ENCODE measurements at regions of chr7 and their contacts with region 1.

Region 1: DNA sequence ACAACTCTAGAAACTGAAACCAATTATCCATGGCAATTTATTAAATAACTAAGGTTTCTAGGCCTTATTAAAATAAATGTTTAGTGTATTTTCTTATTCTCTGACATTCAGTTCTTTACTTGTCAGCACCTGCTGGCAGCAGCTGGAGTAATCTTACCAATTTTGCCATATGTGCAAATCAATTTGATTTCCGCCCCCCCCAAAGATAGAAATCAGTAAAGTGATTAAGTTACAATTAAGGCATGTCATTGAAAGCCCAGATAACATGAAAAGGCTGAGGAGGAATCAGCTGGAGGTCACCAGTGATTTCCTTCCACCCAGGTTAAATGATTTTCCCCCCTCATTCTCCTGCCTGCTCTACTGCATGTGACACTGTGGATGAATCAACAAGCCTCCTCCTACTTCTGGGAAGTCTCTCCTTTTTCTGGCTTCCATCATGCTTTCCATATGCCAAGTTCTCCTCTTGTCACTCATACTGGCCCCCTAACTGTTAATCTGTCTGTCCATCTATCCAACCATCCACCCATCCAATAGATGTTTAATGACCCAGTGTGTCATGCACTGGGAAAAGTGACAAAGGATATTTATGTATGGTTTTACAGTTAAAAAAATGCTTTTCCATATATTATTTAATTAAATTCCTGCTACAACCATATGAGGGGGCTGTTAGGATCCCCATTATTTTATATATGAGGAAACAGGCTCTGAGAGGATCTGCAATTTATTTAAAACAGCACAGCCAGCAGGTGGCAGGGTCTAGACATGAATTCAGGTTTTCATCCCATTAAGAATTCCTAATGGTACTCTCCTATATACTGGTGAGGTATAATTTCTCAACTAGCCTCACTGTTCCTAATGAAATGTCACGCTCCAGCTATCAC is 116.5 kb downstream of the ATXN7L1 start:
- DNase-seq: peak in 2 of 5 donors; percentile 5 to 12
- H3K4me3 ChIP-seq: peak overlapping the region; percentile 13
- H3K4me3 Mint-ChIP-seq: peak overlapping the region in 2 of 7 donors; percentile 21 to 53
- H3K27ac ChIP-seq: no peak overlapping the region
- H3K27ac Mint-ChIP-seq: peak overlapping the region; percentile 24 to 93 (median 56)
- H3K4me1 ChIP-seq: peaks cover 29% of the 10 kb centered on the region
- H3K4me1 Mint-ChIP-seq: peaks cover 34 to 48% (median 43%) of the 10 kb centered on the region in 3 donors
- H3K27me3 ChIP-seq: no peaks in the 10 kb centered on the region
- H3K27me3 Mint-ChIP-seq: peaks cover 0 to 1% of the 10 kb centered on the region in 2 donors

Region 2: GRCh38 chr7:105581066-105581842 is 178.7 kb before region 1 on chr7 and contains the start of gene EFCAB10:
- CTCF ChIA-PET with region 1: no interaction called
- POLR2A ChIA-PET with region 1: no interaction called
- DNase-seq: peak in 4 of 5 donors; percentile 10 to 60 (median 24)
- H3K4me3 ChIP-seq: peak within 1 kb of the TSS; percentile 36
- H3K4me3 Mint-ChIP-seq: peak within 1 kb of the TSS; percentile 58 to 89 (median 69)
- H3K27ac ChIP-seq: no peak within 1 kb of the TSS
- H3K27ac Mint-ChIP-seq: no peak within 1 kb of the TSS
- H3K4me1 ChIP-seq: peaks cover 7% of the 10 kb centered on the region
- H3K4me1 Mint-ChIP-seq: peaks cover 6 to 8% (median 7%) of the 10 kb centered on the region in 3 donors
- H3K27me3 ChIP-seq: no peaks in the 10 kb centered on the region
- H3K27me3 Mint-ChIP-seq: peaks cover 9 to 22% of the 10 kb centered on the region in 2 donors
- total RNA-seq, gene EFCAB10: not detected

Region 3: DNA sequence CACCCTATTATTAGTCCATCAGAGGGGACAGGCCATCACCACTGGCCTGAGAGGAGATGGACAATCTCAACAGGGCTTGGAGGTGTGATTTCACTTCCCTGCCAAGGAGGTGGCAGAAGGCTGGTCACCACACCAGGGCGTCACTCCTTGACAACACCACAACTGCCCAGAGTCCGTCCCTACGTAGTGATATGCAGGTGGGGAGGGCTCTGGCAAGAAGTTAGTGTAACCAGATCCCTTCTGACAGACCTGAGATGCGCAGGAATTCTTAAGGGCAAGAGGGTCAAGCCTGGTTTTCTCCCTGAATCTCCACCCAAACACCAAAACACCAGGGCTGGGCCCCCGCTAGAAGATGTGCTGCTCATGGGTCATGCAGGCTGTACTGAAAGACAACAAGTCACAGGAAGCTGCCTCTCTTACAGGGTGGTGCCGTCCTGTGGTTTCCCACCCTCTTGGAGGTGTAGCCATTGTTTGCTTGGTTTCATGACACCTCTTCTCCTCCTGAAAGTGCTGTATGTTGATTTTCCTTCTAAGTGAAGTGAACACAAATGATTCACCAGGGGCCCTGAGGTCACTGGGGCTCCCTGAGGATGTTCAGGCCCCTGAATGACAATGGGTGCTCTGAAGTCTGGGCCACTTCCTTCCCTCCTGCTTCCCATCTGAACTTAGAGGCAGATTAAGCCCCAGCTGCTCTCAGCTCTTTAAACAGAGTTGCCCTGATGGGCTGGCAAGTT is 89.4 kb after region 1 on chr7:
- CTCF ChIA-PET with region 1: interaction called, 26 read pairs
- POLR2A ChIA-PET with region 1: interaction called, 9 read pairs
- DNase-seq: peak; percentile 49 to 86 (median 62)
- H3K4me3 ChIP-seq: peak overlapping the region; percentile 25
- H3K4me3 Mint-ChIP-seq: peak overlapping the region; percentile 13 to 81 (median 75)
- H3K27ac ChIP-seq: peak overlapping the region; percentile 59
- H3K27ac Mint-ChIP-seq: peak overlapping the region; percentile 80 to 98 (median 94)
- H3K4me1 ChIP-seq: peaks cover 56% of the 10 kb centered on the region
- H3K4me1 Mint-ChIP-seq: peaks cover 73 to 85% (median 76%) of the 10 kb centered on the region in 3 donors
- H3K27me3 ChIP-seq: no peaks in the 10 kb centered on the region
- H3K27me3 Mint-ChIP-seq: no peaks in the 10 kb centered on the region

Region 4: GRCh38 chr7:105876091-105876963 is 116.4 kb after region 1 on chr7 and contains the start of gene ATXN7L1:
- CTCF ChIA-PET with region 1: interaction called, 26 read pairs
- POLR2A ChIA-PET with region 1: no interaction called
- DNase-seq: peak; percentile 84 to 90 (median 87)
- H3K4me3 ChIP-seq: peak within 1 kb of the TSS; percentile 91
- H3K4me3 Mint-ChIP-seq: peak within 1 kb of the TSS; percentile 96 to 100 (median 98)
- H3K27ac ChIP-seq: peak within 1 kb of the TSS; percentile 73
- H3K27ac Mint-ChIP-seq: peak within 1 kb of the TSS; percentile 80 to 99 (median 94)
- H3K4me1 ChIP-seq: peaks cover 46% of the 10 kb centered on the region
- H3K4me1 Mint-ChIP-seq: peaks cover 44 to 79% (median 79%) of the 10 kb centered on the region in 3 donors
- H3K27me3 ChIP-seq: no peaks in the 10 kb centered on the region
- H3K27me3 Mint-ChIP-seq: no peaks in the 10 kb centered on the region
- total RNA-seq, gene ATXN7L1: 9.0 to 9.7 TPM

Region 5: DNA sequence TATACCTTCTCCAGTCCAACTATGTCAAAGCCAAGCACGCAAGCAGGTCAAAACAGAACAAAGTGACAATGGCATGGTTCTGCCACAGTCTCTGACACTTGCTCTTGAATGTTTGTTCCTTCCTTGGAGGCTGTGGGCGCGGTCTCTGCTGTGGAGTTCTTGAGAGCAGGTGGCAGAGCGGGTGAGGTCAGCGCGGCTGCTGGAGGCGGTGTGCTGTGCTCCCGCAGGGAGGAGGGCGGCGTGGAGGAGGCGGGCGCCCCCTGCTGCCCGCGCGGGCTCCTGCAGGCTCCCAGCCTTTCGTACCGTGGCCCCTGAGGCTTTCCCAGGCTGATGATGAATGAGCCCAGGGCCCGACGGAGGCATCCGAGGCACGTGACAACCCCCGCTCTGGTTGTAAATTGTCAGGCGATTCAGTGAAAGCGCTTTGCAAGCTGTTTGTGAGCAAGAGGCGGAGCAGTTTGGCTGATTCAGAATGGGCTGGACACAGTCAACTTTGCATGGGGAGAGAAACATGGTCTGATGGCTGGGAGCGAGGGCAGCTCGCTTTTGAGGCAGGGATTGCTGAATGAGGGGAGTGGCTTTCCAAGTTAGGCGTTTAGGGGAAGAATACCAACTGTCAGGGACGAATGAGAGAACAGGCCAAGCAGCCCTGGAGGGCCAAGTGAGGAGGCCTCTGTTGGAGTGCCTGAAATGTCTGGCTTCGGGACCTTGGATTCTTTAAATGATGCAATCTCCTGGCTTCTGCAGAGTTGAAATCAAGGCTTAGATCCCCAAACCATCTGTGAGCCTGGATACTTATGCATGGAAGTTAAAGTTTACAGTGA is 249.7 kb after region 1 on chr7:
- CTCF ChIA-PET with region 1: interaction called, 34 read pairs
- POLR2A ChIA-PET with region 1: no interaction called
- DNase-seq: peak; percentile 63 to 81 (median 71)
- H3K4me3 ChIP-seq: no peak overlapping the region
- H3K4me3 Mint-ChIP-seq: peak overlapping the region in 5 of 7 donors; percentile 13 to 49 (median 30)
- H3K27ac ChIP-seq: no peak overlapping the region
- H3K27ac Mint-ChIP-seq: peak overlapping the region in 6 of 8 donors; percentile 28 to 96 (median 72)
- H3K4me1 ChIP-seq: peaks cover 29% of the 10 kb centered on the region
- H3K4me1 Mint-ChIP-seq: peaks cover 8 to 28% (median 25%) of the 10 kb centered on the region in 3 donors
- H3K27me3 ChIP-seq: no peaks in the 10 kb centered on the region
- H3K27me3 Mint-ChIP-seq: peaks cover 0 to 3% of the 10 kb centered on the region in 2 donors

Region 6: DNA sequence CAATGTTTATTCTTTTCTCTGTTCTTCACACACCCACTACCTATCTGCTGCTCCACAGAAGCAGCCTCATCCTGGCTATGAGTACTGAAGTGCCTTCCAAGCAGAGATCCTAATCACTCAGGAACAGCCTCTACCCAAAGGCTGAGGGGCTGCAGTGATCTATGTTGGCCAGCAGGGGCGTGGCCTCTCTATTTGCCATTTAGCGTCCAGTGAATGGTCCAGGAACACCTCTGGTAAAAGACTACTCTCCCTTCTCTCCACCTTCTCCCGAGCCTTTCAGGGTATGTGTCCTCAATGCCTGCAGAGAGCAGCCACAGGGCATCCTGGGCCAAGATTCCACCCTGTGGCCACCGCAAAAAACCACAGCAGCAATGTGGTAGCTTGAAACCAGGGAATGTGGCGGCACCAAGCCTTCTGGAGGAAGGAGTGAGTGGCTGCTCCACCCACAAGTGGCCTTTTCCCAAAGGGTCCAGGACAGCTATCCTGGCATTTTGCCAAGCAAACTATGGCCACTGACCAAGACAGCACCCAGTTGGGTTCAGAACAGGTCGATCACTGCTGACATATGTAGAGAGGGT is 281.3 kb after region 1 on chr7:
- CTCF ChIA-PET with region 1: interaction called, 113 read pairs
- POLR2A ChIA-PET with region 1: interaction called, 4 read pairs
- DNase-seq: peak in 2 of 5 donors; percentile 10 to 29
- H3K4me3 ChIP-seq: no peak overlapping the region
- H3K4me3 Mint-ChIP-seq: no peak overlapping the region
- H3K27ac ChIP-seq: no peak overlapping the region
- H3K27ac Mint-ChIP-seq: peak overlapping the region in 3 of 8 donors; percentile 6 to 14 (median 8)
- H3K4me1 ChIP-seq: peaks cover 30% of the 10 kb centered on the region
- H3K4me1 Mint-ChIP-seq: peaks cover 15 to 31% (median 30%) of the 10 kb centered on the region in 3 donors
- H3K27me3 ChIP-seq: no peaks in the 10 kb centered on the region
- H3K27me3 Mint-ChIP-seq: peaks cover 2 to 11% of the 10 kb centered on the region in 2 donors

Region 7: GRCh38 chr7:106047818-106048705 is 288.2 kb after region 1 on chr7:
- CTCF ChIA-PET with region 1: interaction called, 113 read pairs
- POLR2A ChIA-PET with region 1: no interaction called
- DNase-seq: no peak
- H3K4me3 ChIP-seq: no peak overlapping the region
- H3K4me3 Mint-ChIP-seq: no peak overlapping the region
- H3K27ac ChIP-seq: no peak overlapping the region
- H3K27ac Mint-ChIP-seq: no peak overlapping the region
- H3K4me1 ChIP-seq: peaks cover under 1% of the 10 kb centered on the region
- H3K4me1 Mint-ChIP-seq: no peaks in the 10 kb centered on the region
- H3K27me3 ChIP-seq: no peaks in the 10 kb centered on the region
- H3K27me3 Mint-ChIP-seq: peaks cover 4 to 8% of the 10 kb centered on the region in 2 donors

Measured in CD8-positive, alpha-beta memory T cell (primary cell).